Endothelial cell of umbilical vein (primary cell): ENCODE measurements at regions of chr1 and their contacts with region 1.

Region 1: GRCh38 chr1:101309334-101310311 is 72.8 kb downstream of the S1PR1 start:
- DNase-seq: peak; percentile 79
- H3K4me3 ChIP-seq: peak overlapping the region in 2 of 3 experiments; percentile 27 to 63
- H3K27ac ChIP-seq: no peak overlapping the region
- H3K4me1 ChIP-seq: peaks cover 6% of the 10 kb centered on the region
- H3K27me3 ChIP-seq: peaks cover 0 to 1% of the 10 kb centered on the region in 2 experiments
- CTCF ChIP-seq: peak; percentile 87 to 90
- POLR2A ChIP-seq: no peak

Region 2: GRCh38 chr1:101136739-101137138 is 172.9 kb before region 1 on chr1:
- CTCF ChIA-PET with region 1: interaction called, 11 read pairs
- POLR2A ChIA-PET with region 1: no interaction called
- dilution Hi-C with region 1: no loop called
- intact Hi-C with region 1: loop called (anchors 1 kb)
- DNase-seq: peak; percentile 91
- H3K4me3 ChIP-seq: no peak overlapping the region
- H3K27ac ChIP-seq: no peak overlapping the region
- H3K4me1 ChIP-seq: peaks cover 28% of the 10 kb centered on the region
- H3K27me3 ChIP-seq: no peaks in the 10 kb centered on the region
- CTCF ChIP-seq: peak; percentile 33 to 43
- POLR2A ChIP-seq: no peak

Region 3: DNA sequence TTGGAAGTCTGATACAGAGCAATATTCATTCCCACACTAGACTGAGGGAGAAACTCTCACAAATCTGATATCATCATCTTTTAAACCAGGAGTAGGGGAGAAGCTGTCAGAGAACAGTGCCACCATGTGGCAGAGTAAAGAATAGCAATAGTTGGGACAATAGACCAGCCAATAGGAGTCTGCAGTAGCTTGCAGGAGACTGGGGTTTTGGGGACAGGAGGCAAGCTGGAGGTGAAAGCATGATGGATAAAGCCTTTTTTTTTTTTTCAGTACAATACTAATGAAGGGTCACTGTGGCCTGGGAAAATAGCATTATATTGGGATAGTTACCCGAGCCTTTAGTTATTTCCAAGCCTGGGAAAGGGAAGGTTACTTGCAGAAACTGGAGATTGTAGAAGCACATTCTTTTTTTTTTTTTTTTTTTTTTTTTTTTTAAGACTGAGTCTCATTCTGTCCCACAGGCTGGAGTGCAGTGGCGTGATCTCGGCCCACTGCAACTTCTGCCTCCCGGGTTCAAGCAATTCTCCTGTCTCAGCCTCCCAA is 47.9 kb after region 1 on chr1:
- CTCF ChIA-PET with region 1: interaction called, 132 read pairs
- POLR2A ChIA-PET with region 1: no interaction called
- dilution Hi-C with region 1: no loop called
- intact Hi-C with region 1: loop called (anchors 1 kb)
- DNase-seq: peak; percentile 88
- H3K4me3 ChIP-seq: no peak overlapping the region
- H3K27ac ChIP-seq: no peak overlapping the region
- H3K4me1 ChIP-seq: no peaks in the 10 kb centered on the region
- H3K27me3 ChIP-seq: no peaks in the 10 kb centered on the region
- CTCF ChIP-seq: peak; percentile 73 to 88
- POLR2A ChIP-seq: no peak

Region 4: DNA sequence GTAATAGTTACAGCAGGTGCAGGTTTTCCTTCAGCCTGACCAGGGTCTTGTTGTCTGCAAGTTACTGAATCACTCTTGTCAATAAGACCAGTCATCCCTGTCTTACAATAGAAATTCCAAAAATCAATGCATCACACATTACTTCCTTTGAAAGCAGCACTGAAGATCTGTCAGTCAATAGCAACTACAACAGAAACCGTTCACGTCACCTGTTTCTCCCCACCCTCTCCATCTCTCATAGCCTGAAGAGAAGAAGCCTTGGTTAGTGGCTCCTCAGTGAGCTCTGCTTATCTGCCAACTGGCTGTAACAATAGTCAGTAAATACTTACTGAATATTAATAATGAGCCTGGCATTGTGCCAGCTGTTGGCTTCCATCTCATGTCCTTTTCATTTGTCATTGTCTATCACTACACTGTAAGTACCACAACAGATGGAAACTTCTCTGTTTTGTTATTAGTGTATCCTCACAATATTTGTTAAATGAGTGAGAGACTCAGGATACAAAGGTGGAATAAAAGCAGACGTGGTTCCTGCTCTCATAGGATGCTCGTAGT is 122.4 kb after region 1 on chr1:
- CTCF ChIA-PET with region 1: interaction called, 265 read pairs
- POLR2A ChIA-PET with region 1: no interaction called
- dilution Hi-C with region 1: no loop called
- intact Hi-C with region 1: no loop called
- DNase-seq: no peak
- H3K4me3 ChIP-seq: no peak overlapping the region
- H3K27ac ChIP-seq: no peak overlapping the region
- H3K4me1 ChIP-seq: no peaks in the 10 kb centered on the region
- H3K27me3 ChIP-seq: no peaks in the 10 kb centered on the region
- CTCF ChIP-seq: no peak
- POLR2A ChIP-seq: no peak

Region 5: DNA sequence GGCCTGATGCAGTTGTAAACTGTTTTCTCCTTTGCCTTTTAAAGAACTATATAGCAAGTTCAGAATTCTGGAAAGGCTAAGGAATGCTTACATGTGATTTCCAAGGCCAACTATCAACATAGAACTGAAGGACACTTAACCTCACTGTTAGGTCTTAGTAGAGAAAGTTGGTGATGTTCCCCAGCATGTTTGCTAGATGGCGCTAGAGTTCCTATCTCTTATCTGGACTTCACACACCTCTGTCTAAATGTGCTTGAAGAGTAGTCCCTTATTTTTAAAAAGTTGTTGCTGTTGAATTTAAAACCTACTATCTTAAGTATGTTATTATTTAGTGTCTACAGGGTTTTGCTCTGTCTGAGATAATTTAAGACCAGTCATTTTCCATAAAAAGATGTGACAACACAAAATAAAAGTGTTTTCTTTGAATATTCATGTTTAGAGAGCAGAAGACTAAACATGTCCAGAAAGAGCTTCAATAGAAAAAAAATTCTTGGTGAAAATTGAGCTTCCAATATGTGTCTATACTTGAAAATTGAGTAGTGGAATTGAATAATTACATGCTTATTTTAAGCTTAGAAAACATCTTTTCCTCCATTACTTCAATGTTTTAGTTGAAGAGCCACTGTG is 164.5 kb after region 1 on chr1:
- CTCF ChIA-PET with region 1: interaction called, 10 read pairs
- POLR2A ChIA-PET with region 1: no interaction called
- dilution Hi-C with region 1: no loop called
- intact Hi-C with region 1: no loop called
- DNase-seq: peak; percentile 19
- H3K4me3 ChIP-seq: no peak overlapping the region
- H3K27ac ChIP-seq: no peak overlapping the region
- H3K4me1 ChIP-seq: no peaks in the 10 kb centered on the region
- H3K27me3 ChIP-seq: peaks cover 6 to 8% of the 10 kb centered on the region in 2 experiments
- CTCF ChIP-seq: peak; percentile 47 to 61
- POLR2A ChIP-seq: no peak